Mammary epithelial cell (primary cell): ENCODE measurements at regions of chr3 and their contacts with region 1.

Region 1: GRCh38 chr3:65720989-65721737 is 317.6 kb downstream of the MAGI1 start:
- DNase-seq: no peak
- H3K4me3 ChIP-seq: no peak overlapping the region
- H3K27ac ChIP-seq: no peak overlapping the region
- H3K4me1 ChIP-seq: no peaks in the 10 kb centered on the region
- H3K27me3 ChIP-seq: no peaks in the 10 kb centered on the region
- CTCF ChIP-seq: no peak

Region 2: GRCh38 chr3:65776494-65776893 is 55.3 kb after region 1 on chr3:
- CTCF ChIA-PET with region 1: no interaction called
- dilution Hi-C with region 1: loop called (anchors 5 kb)
- in situ Hi-C with region 1: no loop called
- intact Hi-C with region 1: no loop called
- DNase-seq: peak; percentile 32
- H3K4me3 ChIP-seq: no peak overlapping the region
- H3K27ac ChIP-seq: no peak overlapping the region
- H3K4me1 ChIP-seq: no peaks in the 10 kb centered on the region
- H3K27me3 ChIP-seq: no peaks in the 10 kb centered on the region
- CTCF ChIP-seq: no peak

Region 3: GRCh38 chr3:65811086-65811761 is 90.1 kb after region 1 on chr3:
- CTCF ChIA-PET with region 1: no interaction called
- dilution Hi-C with region 1: no loop called
- in situ Hi-C with region 1: no loop called
- intact Hi-C with region 1: no loop called
- DNase-seq: peak; percentile 12
- H3K4me3 ChIP-seq: no peak overlapping the region
- H3K27ac ChIP-seq: no peak overlapping the region
- H3K4me1 ChIP-seq: no peaks in the 10 kb centered on the region
- H3K27me3 ChIP-seq: no peaks in the 10 kb centered on the region
- CTCF ChIP-seq: no peak